AG04449 (cell line): ENCODE measurements at regions of chr6 and their contacts with region 1.

Region 1: DNA sequence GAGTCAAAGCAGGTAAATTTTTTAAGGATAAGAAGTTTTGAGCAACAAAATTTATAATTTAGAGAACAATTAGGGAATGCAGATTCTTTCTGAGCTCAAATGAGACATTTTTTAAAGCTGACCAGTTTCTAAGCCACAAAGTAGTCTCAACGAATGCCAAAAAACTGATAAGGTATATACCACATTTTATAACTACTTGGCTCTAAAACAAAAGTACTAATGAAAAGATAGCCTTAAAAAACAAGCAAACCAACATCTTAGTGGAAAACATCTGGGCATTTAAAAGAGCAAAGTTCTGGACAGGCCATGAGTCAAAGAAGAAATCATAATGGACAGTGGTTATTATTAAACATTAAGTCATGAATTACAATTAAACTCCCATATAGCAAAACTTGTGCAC is 23.2 kb upstream of the RNF146 start:
- DNase-seq: no peak
- H3K4me3 ChIP-seq: no peak overlapping the region
- CTCF ChIP-seq: no peak

Region 2: GRCh38 chr6:127266178-127266891 is 22.8 kb after region 1 on chr6 and contains the start of gene RNF146:
- CTCF ChIA-PET with region 1: interaction called, 10 read pairs
- POLR2A ChIA-PET with region 1: interaction called, 4 read pairs
- DNase-seq: peak; percentile 21
- H3K4me3 ChIP-seq: peak within 1 kb of the TSS; percentile 92
- CTCF ChIP-seq: peak; percentile 75